CD4-positive, alpha-beta memory T cell (primary cell): ENCODE measurements at regions of chr2 and their contacts with region 1.

Region 1: GRCh38 chr2:237474931-237475703 is 11.9 kb upstream of the MLPH start:
- DNase-seq: peak; percentile 63 to 75 (median 69)
- H3K4me3 ChIP-seq: peak overlapping the region in 1 of 2 donors; percentile 64
- H3K4me3 Mint-ChIP-seq: peak overlapping the region; percentile 84 to 88 (median 87)
- H3K27ac ChIP-seq: peak overlapping the region; percentile 37
- H3K27ac Mint-ChIP-seq: peak overlapping the region in 6 of 7 donors; percentile 40 to 85 (median 76)
- H3K4me1 ChIP-seq: peaks cover 12% of the 10 kb centered on the region
- H3K4me1 Mint-ChIP-seq: peaks cover 0 to 13% (median 4%) of the 10 kb centered on the region in 4 donors
- H3K27me3 ChIP-seq: peaks cover 8% of the 10 kb centered on the region
- H3K27me3 Mint-ChIP-seq: peaks cover 3 to 23% of the 10 kb centered on the region in 2 donors

Region 2: GRCh38 chr2:237154082-237154638 is 321.0 kb before region 1 on chr2:
- CTCF ChIA-PET with region 1: interaction called, 11 read pairs
- POLR2A ChIA-PET with region 1: no interaction called
- intact Hi-C with region 1: no loop called
- DNase-seq: peak; percentile 48 to 59 (median 57)
- H3K4me3 ChIP-seq: no peak overlapping the region
- H3K4me3 Mint-ChIP-seq: no peak overlapping the region
- H3K27ac ChIP-seq: no peak overlapping the region
- H3K27ac Mint-ChIP-seq: no peak overlapping the region
- H3K4me1 ChIP-seq: no peaks in the 10 kb centered on the region
- H3K4me1 Mint-ChIP-seq: peaks cover 0 to 5% (median 2%) of the 10 kb centered on the region in 4 donors
- H3K27me3 ChIP-seq: no peaks in the 10 kb centered on the region
- H3K27me3 Mint-ChIP-seq: peaks cover 1 to 3% of the 10 kb centered on the region in 2 donors

Region 3: DNA sequence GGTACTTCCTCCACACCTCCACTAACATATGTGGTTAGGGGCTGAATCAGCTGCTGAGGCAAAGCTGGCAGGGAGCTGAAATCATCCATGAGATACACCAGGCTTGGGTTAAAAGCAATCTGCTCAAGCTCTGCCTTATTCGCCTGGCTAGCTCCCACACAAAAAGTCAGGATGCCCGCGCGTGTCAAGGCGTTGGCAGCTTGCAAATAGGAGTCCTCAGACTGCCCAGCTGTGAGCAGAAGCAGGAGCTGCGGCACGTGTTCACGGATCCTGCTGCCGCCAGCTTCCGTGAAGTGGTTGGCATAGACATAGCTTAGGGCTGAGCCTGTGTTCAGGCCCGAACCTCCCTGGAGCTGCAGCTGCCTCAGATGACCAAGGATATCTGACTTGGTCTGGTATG is 96.5 kb before region 1 on chr2:
- CTCF ChIA-PET with region 1: no interaction called
- POLR2A ChIA-PET with region 1: no interaction called
- intact Hi-C with region 1: no loop called
- DNase-seq: no peak
- H3K4me3 ChIP-seq: no peak overlapping the region
- H3K4me3 Mint-ChIP-seq: no peak overlapping the region
- H3K27ac ChIP-seq: no peak overlapping the region
- H3K27ac Mint-ChIP-seq: no peak overlapping the region
- H3K4me1 ChIP-seq: no peaks in the 10 kb centered on the region
- H3K4me1 Mint-ChIP-seq: no peaks in the 10 kb centered on the region
- H3K27me3 ChIP-seq: no peaks in the 10 kb centered on the region
- H3K27me3 Mint-ChIP-seq: no peaks in the 10 kb centered on the region

Region 4: GRCh38 chr2:237434866-237435311 is 40.2 kb before region 1 on chr2:
- CTCF ChIA-PET with region 1: interaction called, 88 read pairs
- POLR2A ChIA-PET with region 1: interaction called, 42 read pairs
- intact Hi-C with region 1: no loop called
- DNase-seq: peak; percentile 60 to 80 (median 68)
- H3K4me3 ChIP-seq: peak overlapping the region; percentile 27 to 51
- H3K4me3 Mint-ChIP-seq: peak overlapping the region; percentile 67 to 94 (median 80)
- H3K27ac ChIP-seq: peak overlapping the region; percentile 52
- H3K27ac Mint-ChIP-seq: peak overlapping the region; percentile 73 to 94 (median 84)
- H3K4me1 ChIP-seq: peaks cover 85% of the 10 kb centered on the region
- H3K4me1 Mint-ChIP-seq: peaks cover 58 to 84% (median 71%) of the 10 kb centered on the region in 4 donors
- H3K27me3 ChIP-seq: no peaks in the 10 kb centered on the region
- H3K27me3 Mint-ChIP-seq: no peaks in the 10 kb centered on the region

Region 5: DNA sequence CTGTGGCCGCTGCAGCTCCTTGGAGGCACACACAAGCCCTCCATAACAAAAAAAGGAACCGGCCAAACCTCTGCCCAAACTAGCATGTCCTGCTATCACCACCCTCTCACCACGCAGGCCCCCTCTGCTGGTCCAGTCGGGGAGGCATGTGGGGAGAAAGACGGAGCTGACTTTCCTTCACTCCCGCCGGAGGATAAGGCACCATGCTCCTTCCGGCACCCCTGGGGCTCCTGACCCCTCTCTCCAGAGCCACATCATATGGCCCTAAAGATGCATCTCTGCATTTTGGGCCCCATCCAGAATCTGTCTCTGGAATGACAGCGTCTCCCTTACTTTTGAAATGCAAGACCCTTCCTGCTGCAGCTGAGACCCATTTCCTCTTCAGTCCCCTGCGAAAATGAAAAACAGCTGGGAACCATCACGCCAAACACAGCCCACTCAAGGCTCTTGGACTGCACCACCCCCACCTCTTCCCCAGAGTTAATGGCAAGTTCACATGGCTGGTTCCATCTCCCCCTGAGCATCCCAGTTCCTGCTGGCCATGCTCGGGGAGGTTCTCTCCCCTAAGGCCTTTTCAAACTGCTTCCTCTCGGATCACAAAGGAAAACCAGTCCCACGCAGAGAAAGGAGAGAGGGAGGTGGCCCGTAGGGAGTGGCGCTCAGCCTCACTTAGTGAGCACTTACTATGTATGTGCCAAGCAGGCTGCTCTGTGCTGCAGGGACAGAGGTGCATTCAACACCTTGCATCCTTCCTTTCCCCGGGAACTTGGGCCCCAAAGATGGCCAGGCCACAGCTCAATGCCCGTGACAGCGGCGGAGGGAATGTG is 23.3 kb before region 1 on chr2:
- CTCF ChIA-PET with region 1: interaction called, 19 read pairs
- POLR2A ChIA-PET with region 1: no interaction called
- intact Hi-C with region 1: no loop called
- DNase-seq: no peak
- H3K4me3 ChIP-seq: no peak overlapping the region
- H3K4me3 Mint-ChIP-seq: no peak overlapping the region
- H3K27ac ChIP-seq: no peak overlapping the region
- H3K27ac Mint-ChIP-seq: no peak overlapping the region
- H3K4me1 ChIP-seq: no peaks in the 10 kb centered on the region
- H3K4me1 Mint-ChIP-seq: peaks cover 0 to 9% (median 4%) of the 10 kb centered on the region in 4 donors
- H3K27me3 ChIP-seq: no peaks in the 10 kb centered on the region
- H3K27me3 Mint-ChIP-seq: no peaks in the 10 kb centered on the region

Region 6: DNA sequence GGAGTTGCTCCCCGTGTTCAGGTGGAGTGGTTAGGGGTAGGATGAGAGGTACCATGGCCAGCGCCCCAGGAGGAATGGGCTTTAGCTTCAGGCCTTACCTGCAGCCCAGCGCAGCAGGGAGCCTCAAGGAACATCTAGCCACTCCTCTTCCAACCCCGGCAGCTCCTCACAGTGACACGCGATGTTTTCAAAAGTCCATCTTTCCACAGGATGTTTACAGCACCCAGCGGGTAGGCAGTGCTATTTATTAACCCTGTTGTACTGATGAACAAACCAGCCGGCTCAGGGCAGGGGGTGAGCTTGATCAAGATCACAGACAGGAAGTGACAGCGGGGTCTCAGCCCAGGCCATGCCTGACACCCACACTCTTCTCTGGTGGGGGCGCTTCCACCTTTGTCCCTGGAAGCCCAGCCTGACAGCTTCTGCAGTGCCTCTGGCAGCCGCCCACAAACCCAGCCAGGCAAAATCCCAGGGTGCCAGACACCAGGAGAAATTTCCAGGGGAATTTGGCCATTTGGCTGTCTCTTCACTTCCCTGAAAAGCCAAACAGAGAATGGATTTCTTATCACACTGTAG is 72.8 kb after region 1 on chr2:
- CTCF ChIA-PET with region 1: no interaction called
- POLR2A ChIA-PET with region 1: no interaction called
- intact Hi-C with region 1: no loop called
- DNase-seq: no peak
- H3K4me3 ChIP-seq: no peak overlapping the region
- H3K4me3 Mint-ChIP-seq: no peak overlapping the region
- H3K27ac ChIP-seq: no peak overlapping the region
- H3K27ac Mint-ChIP-seq: no peak overlapping the region
- H3K4me1 ChIP-seq: no peaks in the 10 kb centered on the region
- H3K4me1 Mint-ChIP-seq: no peaks in the 10 kb centered on the region
- H3K27me3 ChIP-seq: no peaks in the 10 kb centered on the region
- H3K27me3 Mint-ChIP-seq: no peaks in the 10 kb centered on the region